ENCODE measurements at regions of chr19 and their contacts with region 1.

Region 1: DNA sequence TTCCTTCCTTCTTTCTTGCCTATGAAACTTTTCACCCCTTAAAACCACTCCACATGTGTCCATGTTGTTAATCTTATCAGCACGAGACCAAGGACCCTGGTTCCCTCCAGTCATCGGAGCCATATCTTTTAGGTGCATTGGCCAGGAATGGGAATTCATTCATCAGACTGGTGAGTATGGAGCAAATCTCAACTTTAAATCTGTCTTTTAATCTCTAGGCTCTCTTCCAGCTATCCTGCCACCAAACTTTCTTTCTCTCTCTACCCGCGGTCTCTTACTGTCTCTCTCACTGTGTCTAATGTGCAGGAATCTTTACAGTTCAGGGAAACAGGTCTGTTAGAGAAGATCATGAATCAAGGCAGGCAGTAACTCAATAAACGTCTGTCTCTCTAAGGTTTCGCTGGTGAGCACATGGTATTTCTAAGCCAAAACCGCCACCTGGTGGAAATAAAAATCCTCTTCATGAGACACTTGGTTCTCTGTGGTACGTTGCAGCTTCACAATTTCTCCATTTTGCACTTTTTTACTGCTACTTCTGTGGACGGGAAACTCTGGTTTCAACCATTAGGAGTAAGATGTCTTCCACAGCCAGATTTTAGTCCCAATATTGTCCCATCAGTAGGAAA is 16.1 kb downstream of the LGALS16 start:
- DNase-seq: peak; percentile 64
- ATAC-seq: peak; percentile 65
- H3K4me3 Mint-ChIP-seq: no peak overlapping the region
- H3K27ac Mint-ChIP-seq: no peak overlapping the region
- H3K4me1 Mint-ChIP-seq: peaks cover 31% of the 10 kb centered on the region
- H3K27me3 Mint-ChIP-seq: peaks cover 27% of the 10 kb centered on the region

Region 2: DNA sequence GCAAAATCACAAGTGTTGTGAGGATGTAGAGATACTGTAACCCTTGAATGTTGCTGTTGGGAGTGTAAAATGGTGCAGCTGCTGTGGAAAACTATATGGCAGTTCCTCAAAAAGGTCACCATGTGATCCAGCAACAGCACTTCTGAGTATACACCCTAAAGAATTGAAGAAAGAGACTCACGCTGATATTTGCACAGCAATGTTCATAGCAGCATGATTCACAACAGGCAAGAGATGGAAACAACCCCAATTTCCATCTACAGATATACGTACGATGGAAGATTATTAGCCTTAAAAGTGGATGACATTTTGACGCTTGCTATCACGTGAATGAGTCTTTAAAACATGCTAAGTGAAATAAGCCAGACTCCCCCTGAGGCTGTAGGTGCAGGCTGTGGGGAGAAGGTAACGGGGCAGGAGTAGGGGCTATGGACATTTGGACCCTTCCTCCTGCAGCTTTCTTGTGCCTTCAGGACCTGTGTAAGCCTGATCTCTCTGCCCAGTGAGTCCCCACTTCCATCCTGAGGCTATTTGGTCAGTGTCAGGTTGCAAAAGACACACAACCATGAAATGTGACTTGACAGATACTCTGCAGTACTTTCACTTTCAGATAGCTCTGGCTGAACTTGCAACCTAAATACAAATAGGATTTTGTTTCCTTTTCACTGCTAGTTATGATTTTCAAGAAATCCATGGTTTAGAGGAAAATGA is 114.3 kb before region 1 on chr19:
- CTCF ChIA-PET with region 1: interaction called, 79 read pairs
- DNase-seq: no peak
- ATAC-seq: peak; percentile 50
- H3K4me3 Mint-ChIP-seq: peak overlapping the region; percentile 48
- H3K27ac Mint-ChIP-seq: peak overlapping the region; percentile 68
- H3K4me1 Mint-ChIP-seq: peaks cover 30% of the 10 kb centered on the region
- H3K27me3 Mint-ChIP-seq: peaks cover 3% of the 10 kb centered on the region

Region 3: DNA sequence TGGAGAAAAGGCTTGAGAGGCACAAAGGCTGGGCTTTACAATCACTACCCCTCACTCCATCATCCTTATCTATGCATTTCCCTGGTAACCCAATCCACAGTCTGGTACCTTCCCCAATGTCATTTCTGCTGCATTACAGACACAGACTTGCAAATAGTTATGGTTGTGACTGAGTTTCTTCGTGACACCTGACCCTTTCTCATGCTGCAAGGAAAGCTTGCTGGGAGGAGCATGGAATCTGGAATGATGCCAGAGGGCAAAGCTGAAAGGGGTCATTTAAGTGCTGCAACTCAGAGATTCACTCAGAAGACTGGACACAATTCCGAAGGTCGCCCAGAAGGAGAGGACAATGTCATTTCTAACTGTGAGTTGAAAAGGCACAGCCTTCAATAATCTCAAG is 16.2 kb before region 1 on chr19 and contains the start of gene LGALS16:
- CTCF ChIA-PET with region 1: no interaction called
- DNase-seq: no peak
- ATAC-seq: no peak
- H3K4me3 Mint-ChIP-seq: no peak within 1 kb of the TSS
- H3K27ac Mint-ChIP-seq: no peak within 1 kb of the TSS
- H3K4me1 Mint-ChIP-seq: no peaks in the 10 kb centered on the region
- H3K27me3 Mint-ChIP-seq: peaks cover 39% of the 10 kb centered on the region
- total RNA-seq, gene LGALS16: not detected

Region 4: GRCh38 chr19:39765091-39766076 is 93.5 kb after region 1 on chr19:
- CTCF ChIA-PET with region 1: interaction called, 11 read pairs
- DNase-seq: no peak
- ATAC-seq: no peak
- H3K4me3 Mint-ChIP-seq: no peak overlapping the region
- H3K27ac Mint-ChIP-seq: no peak overlapping the region
- H3K4me1 Mint-ChIP-seq: peaks cover 8% of the 10 kb centered on the region
- H3K27me3 Mint-ChIP-seq: peaks cover 41% of the 10 kb centered on the region